Lower lobe of right lung (tissue), 2 donors: ENCODE measurements at regions of chr10 and their contacts with region 1.

Region 1: GRCh38 chr10:123132576-123133477 is 2.9 kb upstream of the HMX3 start:
- DNase-seq: peak; percentile 88
- ATAC-seq: peak; percentile 86 to 88
- H3K4me3 ChIP-seq: peak overlapping the region; percentile 37
- H3K27ac ChIP-seq: no peak overlapping the region
- H3K4me1 ChIP-seq: peaks cover 49% of the 10 kb centered on the region
- H3K27me3 ChIP-seq: peaks cover 100% of the 10 kb centered on the region
- CTCF ChIP-seq: peak; percentile 88

Region 2: DNA sequence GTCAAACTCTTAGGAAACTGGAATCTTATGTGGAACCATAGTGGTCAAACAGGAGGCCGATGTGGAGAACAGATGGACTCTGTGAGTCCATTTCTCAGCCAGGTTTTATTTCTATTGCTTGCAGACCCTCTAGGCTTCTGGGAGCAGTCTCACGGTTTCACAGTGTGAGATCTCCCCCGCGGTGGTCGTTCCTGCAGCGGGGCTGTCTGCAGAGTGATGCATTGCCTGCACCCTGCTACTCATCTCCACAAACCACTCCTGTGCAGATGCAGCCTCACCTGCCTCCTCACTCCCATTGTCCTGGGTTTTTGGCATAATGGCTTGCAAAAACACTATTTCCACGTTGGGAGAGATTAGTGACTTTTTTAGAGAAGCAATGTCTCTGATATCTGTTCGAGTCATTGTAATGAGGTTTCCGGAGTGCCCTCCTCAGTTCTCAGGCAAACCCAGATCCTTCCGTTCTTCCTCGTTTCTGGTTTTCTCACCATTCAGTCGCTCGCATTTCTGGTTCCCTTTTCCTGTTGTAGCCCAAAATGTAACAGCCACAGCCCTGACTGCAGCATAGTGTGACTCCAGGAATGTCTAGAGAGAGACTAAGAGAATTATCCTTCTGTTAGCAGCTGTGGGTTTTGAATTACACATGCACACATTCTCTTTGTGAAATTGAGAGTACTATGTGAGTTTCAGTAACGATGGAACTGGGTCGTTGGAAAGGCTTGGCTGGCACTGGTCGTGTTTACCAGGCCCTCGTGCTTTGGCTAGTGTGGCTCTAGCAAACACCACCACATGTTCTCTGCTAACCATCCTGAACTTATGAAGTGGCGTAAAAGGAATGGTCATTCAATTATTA is 93.8 kb before region 1 on chr10:
- intact Hi-C with region 1: no loop called
- DNase-seq: no peak
- ATAC-seq: peak in 1 of 2 donors; percentile 48
- H3K4me3 ChIP-seq: no peak overlapping the region
- H3K27ac ChIP-seq: no peak overlapping the region
- H3K4me1 ChIP-seq: no peaks in the 10 kb centered on the region
- H3K27me3 ChIP-seq: no peaks in the 10 kb centered on the region
- CTCF ChIP-seq: no peak

Region 3: GRCh38 chr10:123562811-123563580 is 430.2 kb after region 1 on chr10:
- intact Hi-C with region 1: loop called (anchors 5 kb)
- DNase-seq: no peak
- ATAC-seq: no peak
- H3K4me3 ChIP-seq: no peak overlapping the region
- H3K27ac ChIP-seq: no peak overlapping the region
- H3K4me1 ChIP-seq: no peaks in the 10 kb centered on the region
- H3K27me3 ChIP-seq: peaks cover 16% of the 10 kb centered on the region
- CTCF ChIP-seq: no peak